ENCODE measurements at regions of chr5 and their contacts with region 1.

Region 1: GRCh38 chr5:98193921-98194760 is 579.3 kb upstream of the RGMB start:
- DNase-seq: peak; percentile 90
- ATAC-seq: peak; percentile 96
- H3K4me3 ChIP-seq: no peak overlapping the region
- H3K27ac ChIP-seq: peak overlapping the region; percentile 41
- H3K4me1 ChIP-seq: peaks cover 17% of the 10 kb centered on the region
- H3K27me3 ChIP-seq: no peaks in the 10 kb centered on the region
- CTCF ChIP-seq: no peak

Region 2: GRCh38 chr5:98179791-98180755 is 14.1 kb before region 1 on chr5:
- CTCF ChIA-PET with region 1: no interaction called
- POLR2A ChIA-PET with region 1: no interaction called
- intact Hi-C with region 1: loop called (anchors 1 kb)
- DNase-seq: no peak
- ATAC-seq: no peak
- H3K4me3 ChIP-seq: no peak overlapping the region
- H3K27ac ChIP-seq: no peak overlapping the region
- H3K4me1 ChIP-seq: no peaks in the 10 kb centered on the region
- H3K27me3 ChIP-seq: no peaks in the 10 kb centered on the region
- CTCF ChIP-seq: no peak

Region 3: GRCh38 chr5:98258939-98259338 is 64.8 kb after region 1 on chr5:
- CTCF ChIA-PET with region 1: no interaction called
- POLR2A ChIA-PET with region 1: no interaction called
- intact Hi-C with region 1: loop called (anchors 2 kb)
- DNase-seq: peak; percentile 66
- ATAC-seq: no peak
- H3K4me3 ChIP-seq: no peak overlapping the region
- H3K27ac ChIP-seq: no peak overlapping the region
- H3K4me1 ChIP-seq: peaks cover 12% of the 10 kb centered on the region; the same call in 1 of the 2 replicates
- H3K27me3 ChIP-seq: no peaks in the 10 kb centered on the region
- CTCF ChIP-seq: no peak

Measured in PC-3 (cell line).